ENCODE measurements at regions of chr10 and their contacts with region 1.

Region 1: GRCh38 chr10:102117391-102118159 is 2.6 kb downstream of the LDB1 start:
- DNase-seq: peak; percentile 80 to 96 (median 90)

Region 2: GRCh38 chr10:102065561-102066398 is 51.8 kb before region 1 on chr10:
- intact Hi-C with region 1: loop called (anchors 2 kb)
- DNase-seq: peak in 32 of 42 donors; percentile 10 to 58 (median 34)